BJ (cell line): ENCODE measurements at regions of chr5 and their contacts with region 1.

Region 1: GRCh38 chr5:134904630-134905245 is at the start of gene PCBD2:
- DNase-seq: peak; percentile 31
- H3K4me3 ChIP-seq: peak within 1 kb of the TSS; percentile 59
- H3K27me3 ChIP-seq: no peaks in the 10 kb centered on the region
- CTCF ChIP-seq: peak; percentile 85
- polyA plus RNA-seq, gene PCBD2: 3.3 and 5.6 TPM in 2 replicates

Region 2: GRCh38 chr5:134692722-134693121 is 212.0 kb before region 1 on chr5:
- CTCF ChIA-PET with region 1: no interaction called
- POLR2A ChIA-PET with region 1: no interaction called
- DNase-seq: no peak
- H3K4me3 ChIP-seq: no peak overlapping the region
- H3K27me3 ChIP-seq: no peaks in the 10 kb centered on the region
- CTCF ChIP-seq: no peak

Region 3: DNA sequence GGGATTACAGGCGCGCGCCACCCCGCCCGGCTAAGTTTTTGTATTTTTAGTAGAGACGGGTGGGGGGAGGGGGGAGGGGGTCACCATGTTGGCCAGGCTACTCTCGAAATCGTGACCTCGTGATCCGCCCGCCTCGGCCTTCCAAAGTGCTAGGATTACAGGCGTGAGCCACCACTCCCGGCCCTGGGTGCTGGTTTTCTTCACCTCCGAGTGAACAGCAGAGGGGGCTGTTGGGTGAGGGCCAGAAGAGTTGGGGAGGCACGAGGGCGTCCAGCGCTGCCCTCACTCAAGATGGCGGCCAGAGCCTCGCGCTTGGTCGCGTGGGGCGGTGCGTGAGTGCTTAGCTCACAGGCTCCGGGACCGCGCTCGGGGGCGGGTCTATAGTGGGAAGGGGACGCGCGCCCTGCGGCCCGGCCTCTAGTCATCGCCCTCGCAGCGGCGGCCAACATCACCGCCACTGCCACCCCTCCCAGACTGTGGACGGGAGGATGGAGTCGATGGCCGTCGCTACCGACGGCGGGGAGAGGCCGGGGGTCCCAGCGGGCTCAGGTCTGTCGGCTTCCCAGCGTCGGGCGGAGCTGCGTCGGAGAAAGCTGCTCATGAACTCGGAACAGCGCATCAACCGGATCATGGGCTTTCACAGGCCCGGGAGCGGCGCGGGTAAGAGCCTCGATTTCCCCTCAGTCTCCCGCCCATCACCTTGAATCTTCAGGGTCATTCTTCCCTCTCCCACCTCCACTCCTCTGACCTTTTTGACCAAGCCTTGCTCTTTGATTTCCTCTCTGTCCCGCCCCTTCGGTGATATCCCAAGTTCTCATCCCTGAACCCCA is 166.4 kb before region 1 on chr5 and contains the start of gene CAMLG:
- CTCF ChIA-PET with region 1: interaction called, 28 read pairs
- POLR2A ChIA-PET with region 1: no interaction called
- DNase-seq: peak; percentile 85
- H3K4me3 ChIP-seq: peak within 1 kb of the TSS; percentile 76
- H3K27me3 ChIP-seq: no peaks in the 10 kb centered on the region
- CTCF ChIP-seq: peak; percentile 67
- polyA plus RNA-seq, gene CAMLG: 16.6 and 16.9 TPM in 2 replicates

Region 4: DNA sequence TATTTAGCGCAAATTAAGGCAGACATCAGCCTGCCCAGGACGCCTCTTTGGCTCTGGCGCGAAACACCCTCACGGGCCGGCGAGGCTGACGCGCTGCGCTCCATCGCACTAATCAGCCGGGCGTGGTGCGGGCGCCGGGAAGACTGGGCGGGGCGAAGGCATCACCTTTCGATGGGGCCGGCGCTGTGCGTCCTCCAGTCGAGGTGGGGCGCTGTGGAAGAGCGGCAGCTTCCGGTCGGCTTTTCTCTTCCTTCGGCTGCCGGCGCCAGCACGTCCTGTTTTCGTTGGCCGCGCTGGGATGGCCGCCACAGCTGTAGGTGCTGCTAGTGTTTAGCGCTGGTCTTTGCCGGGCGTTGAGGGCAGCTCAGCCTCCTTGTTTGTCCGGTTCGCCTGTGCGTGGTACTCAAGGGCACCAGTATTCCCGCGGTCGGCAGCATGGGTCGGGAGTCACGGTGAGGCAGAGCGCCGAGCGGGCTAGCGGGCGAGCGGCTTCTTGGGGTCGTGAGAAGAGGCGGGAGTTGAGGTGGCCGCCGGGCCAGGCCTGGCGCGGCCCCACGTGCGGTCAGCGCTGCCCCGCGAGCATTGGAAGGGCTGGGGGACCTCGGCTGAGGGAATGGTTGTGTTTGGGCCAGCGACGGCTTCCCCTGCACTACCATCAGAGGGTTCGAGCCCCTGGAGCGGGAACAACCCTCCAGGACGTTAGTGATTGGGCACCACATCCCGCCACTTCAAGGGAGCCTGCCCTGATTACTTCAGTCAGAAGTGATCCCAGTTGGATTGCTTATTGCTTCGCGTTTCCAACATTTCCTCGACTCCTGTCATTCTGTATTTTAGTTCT is 146.0 kb before region 1 on chr5 and contains the start of gene DDX46:
- CTCF ChIA-PET with region 1: interaction called, 10 read pairs
- POLR2A ChIA-PET with region 1: no interaction called
- DNase-seq: peak; percentile 55
- H3K4me3 ChIP-seq: peak within 1 kb of the TSS; percentile 82
- H3K27me3 ChIP-seq: no peaks in the 10 kb centered on the region
- CTCF ChIP-seq: peak; percentile 88
- polyA plus RNA-seq, gene DDX46: 19.4 and 27.2 TPM in 2 replicates

Region 5: DNA sequence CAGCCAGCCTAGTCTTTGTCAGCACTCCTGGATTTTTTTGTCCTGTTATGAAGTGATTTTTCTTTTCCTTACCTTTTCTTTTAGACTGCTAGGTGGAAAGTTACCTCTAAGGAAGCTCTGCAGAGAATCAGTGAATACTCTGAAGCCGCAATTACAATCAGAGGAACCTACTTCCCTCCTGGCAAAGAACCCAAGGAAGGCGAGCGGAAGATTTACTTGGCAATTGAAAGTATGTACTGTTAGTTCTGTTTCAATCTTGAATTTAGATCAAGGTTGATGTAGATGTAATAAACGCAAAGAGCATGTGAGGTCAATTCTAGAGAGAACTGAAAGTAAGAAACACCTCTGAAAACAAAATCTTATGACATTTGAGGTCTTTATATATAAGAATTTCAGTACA is 86.0 kb before region 1 on chr5:
- CTCF ChIA-PET with region 1: no interaction called
- POLR2A ChIA-PET with region 1: no interaction called
- DNase-seq: no peak
- H3K4me3 ChIP-seq: no peak overlapping the region
- H3K27me3 ChIP-seq: no peaks in the 10 kb centered on the region
- CTCF ChIP-seq: no peak

Region 6: DNA sequence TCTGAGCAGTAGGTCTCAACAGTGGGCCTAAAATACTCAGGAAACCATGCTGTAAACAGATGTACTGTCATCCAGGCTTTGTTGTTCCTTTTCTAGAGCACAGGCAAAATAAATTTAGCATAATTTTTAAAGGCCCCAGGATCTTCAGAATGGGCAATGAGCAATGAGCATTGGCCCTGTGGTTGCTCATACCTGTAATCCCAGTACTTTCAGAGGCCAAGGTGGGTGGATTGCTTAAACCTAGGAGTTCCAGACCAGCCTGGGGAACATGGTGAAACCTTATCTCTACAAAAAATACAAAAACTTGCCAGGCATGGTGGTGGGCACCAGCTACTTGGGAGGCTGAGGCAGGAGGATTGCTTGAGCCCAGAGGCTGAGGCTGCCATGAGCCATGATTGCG is 13.3 kb before region 1 on chr5:
- CTCF ChIA-PET with region 1: interaction called, 15 read pairs
- POLR2A ChIA-PET with region 1: no interaction called
- DNase-seq: no peak
- H3K4me3 ChIP-seq: no peak overlapping the region
- H3K27me3 ChIP-seq: no peaks in the 10 kb centered on the region
- CTCF ChIP-seq: no peak

Region 7: DNA sequence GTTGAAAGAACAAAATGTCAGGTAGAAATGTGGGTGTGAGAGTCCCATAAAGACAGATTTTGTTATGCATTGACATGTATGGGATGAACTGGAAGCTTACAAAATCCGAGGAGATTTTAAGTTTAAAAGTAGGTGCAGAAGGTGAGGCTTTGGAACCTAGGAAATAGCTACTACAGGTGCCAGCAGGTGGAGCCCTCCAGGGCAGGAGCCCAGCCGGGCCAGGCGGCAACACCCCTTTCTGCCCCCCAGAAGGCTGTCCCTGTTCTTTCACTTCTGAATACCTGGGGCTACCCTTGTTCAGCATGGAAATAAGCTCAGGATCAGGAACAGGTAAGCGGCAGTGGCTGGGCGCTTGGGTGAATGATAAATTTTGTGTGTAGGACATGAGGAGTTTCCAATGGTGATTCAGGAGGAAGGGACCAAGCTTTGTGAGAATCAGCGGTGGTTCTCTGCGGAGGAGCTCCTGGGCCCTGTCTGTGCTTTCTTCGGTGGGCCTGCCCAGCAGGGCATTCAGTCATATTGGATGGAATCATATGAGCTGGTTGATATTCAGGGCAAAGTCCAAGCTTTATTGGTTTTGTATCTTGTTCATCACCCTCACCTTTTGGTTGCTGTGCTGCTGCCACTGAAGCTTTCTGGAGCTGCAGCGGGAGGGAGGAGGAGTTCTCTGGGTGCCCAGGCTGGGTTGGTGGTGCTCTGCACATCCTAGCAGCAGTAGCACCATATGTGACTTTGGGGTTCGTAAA is 12.5 kb after region 1 on chr5:
- CTCF ChIA-PET with region 1: interaction called, 13 read pairs
- POLR2A ChIA-PET with region 1: no interaction called
- DNase-seq: no peak
- H3K4me3 ChIP-seq: no peak overlapping the region
- H3K27me3 ChIP-seq: no peaks in the 10 kb centered on the region
- CTCF ChIP-seq: peak; percentile 6; the same call in 1 of the 2 replicates